ENCODE measurements at regions of chr22 and their contacts with region 1.

Region 1: GRCh38 chr22:36775964-36776669 is at the start of gene IFT27:
- DNase-seq: peak; percentile 100
- H3K4me3 ChIP-seq: peak within 1 kb of the TSS; percentile 79 to 87 (median 85)
- H3K27ac ChIP-seq: peak within 1 kb of the TSS; percentile 60
- H3K4me1 ChIP-seq: peaks cover 11% of the 10 kb centered on the region
- H3K27me3 ChIP-seq: no peaks in the 10 kb centered on the region
- CTCF ChIP-seq: no peak
- polyA plus RNA-seq, gene IFT27: 11.5 to 19.2 TPM (median 18.5 TPM) in 3 replicates

Region 2: DNA sequence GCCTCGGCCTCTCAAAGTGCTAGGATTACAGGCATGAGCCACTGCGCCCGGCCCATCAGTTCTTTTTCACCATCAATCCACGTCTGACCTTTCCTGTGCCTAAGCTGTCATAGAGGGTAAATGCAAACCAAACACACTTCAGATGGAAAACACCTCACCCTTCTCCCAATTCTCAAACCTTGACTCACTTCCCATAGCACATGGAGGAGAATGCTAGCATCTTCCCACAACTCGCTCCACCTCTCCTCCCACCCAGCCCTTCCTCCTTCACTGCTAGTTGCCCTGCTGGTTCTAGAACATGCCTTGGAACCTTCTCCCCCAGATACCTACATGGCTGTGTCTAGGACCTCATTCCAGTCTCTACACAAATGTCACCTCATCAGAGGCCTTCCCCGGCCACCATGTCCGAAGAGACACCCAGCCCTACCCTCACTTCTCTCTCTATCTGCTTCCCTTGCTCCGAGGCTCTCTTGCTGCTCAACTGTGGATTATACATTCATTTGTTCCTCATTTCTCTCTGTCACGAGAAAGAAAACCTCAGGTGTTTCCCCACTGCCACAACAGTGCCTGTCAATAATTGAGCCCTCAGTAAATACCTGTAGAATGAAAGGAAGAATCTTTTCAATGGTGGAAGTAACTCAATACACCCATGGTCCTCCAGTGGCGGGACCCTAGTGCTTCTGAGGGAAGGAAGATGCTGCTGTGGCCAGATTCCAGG is 63.4 kb after region 1 on chr22:
- dilution Hi-C with region 1: loop called (anchors 10 kb)
- DNase-seq: no peak
- H3K4me3 ChIP-seq: no peak overlapping the region
- H3K27ac ChIP-seq: no peak overlapping the region
- H3K4me1 ChIP-seq: peaks cover 2% of the 10 kb centered on the region
- H3K27me3 ChIP-seq: no peaks in the 10 kb centered on the region
- CTCF ChIP-seq: no peak

Measured in keratinocyte (primary cell).